Naive thymus-derived CD4-positive, alpha-beta T cell (primary cell): ENCODE measurements at regions of chr2 and their contacts with region 1.

Region 1: DNA sequence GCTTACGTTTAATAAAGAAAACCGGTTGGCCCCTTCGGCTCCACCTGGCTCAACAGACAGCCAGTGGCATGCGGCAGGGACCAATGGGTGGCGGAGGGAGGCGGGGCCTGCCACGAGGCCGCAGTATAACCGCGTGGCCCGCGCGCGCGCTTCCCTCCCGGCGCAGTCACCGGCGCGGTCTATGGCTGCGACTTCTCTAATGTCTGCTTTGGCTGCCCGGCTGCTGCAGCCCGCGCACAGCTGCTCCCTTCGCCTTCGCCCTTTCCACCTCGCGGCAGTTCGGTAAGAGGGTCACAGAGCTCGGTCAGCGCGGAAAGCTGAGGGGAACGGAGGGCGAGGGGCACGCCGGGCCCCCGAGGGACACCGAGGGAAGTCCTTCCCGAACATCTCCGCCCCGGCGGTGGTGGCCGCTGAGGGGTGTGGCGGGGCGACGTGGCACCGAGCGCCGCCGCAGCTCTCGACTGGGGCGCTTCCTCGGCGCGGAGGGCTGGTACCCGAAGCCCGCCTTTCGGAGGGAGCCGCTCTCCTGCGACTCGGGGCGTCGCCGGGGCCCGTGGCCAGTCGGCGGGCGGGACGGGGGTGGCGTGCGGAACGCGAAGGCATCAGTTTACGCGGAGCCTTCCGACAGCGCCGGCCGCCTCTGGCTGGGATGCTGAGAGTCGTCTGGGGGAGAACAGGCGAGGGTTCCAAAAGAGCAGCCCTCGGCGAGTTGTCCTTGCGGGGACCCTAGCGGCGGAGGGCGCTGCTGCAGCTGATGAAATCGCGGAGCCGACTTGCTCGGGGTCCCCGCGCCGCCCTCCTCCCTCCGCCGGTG is at the start of gene MTHFD2:
- DNase-seq: peak; percentile 76 to 93 (median 82)
- ATAC-seq: peak; percentile 94
- H3K4me3 ChIP-seq: peak within 1 kb of the TSS; percentile 65
- H3K4me3 Mint-ChIP-seq: peak within 1 kb of the TSS; percentile 90 to 100 (median 96)
- H3K27ac ChIP-seq: peak within 1 kb of the TSS; percentile 88
- H3K27ac Mint-ChIP-seq: peak within 1 kb of the TSS; percentile 94 to 100 (median 97)
- H3K4me1 ChIP-seq: peaks cover 13 to 16% of the 10 kb centered on the region in 2 donors
- H3K4me1 Mint-ChIP-seq: peaks cover 29 to 50% (median 35%) of the 10 kb centered on the region in 7 donors
- H3K27me3 ChIP-seq: no peaks in the 10 kb centered on the region
- H3K27me3 Mint-ChIP-seq: no peaks in the 10 kb centered on the region
- total RNA-seq, gene MTHFD2: 14.5 to 186 (median 25.1) TPM

Region 2: DNA sequence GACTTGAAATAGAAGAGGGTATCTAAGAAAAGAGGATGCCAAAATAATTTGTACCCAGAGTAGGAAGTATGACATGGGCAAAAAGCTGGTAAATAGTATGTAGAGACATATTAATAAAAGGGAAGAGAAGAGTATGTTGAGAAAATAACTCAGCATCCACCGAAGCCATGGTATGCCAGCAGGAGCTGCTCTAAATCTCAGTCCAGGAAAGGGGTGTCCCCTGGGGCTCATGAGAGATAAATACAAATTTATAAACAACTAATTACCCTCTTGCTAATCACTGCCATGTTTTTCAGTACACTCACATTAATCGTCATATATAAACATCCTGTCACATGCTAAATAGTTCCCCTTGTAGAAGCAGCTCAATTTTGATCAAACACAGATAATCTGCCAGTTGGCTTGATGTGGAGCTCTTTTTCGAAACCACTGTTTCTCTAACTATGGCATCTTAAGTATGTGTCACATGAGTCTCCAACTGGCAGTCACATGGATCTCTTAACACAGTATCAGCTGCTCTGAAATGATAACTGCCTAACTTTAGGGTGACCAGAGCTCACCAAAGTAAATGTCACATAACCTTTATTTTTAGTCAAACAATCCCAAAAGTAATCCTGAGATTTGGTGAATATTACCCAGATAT is 1404.7 kb before region 1 on chr2:
- CTCF ChIA-PET with region 1: no interaction called
- POLR2A ChIA-PET with region 1: no interaction called
- intact Hi-C with region 1: no loop called
- DNase-seq: no peak
- ATAC-seq: no peak
- H3K4me3 ChIP-seq: no peak overlapping the region
- H3K4me3 Mint-ChIP-seq: no peak overlapping the region
- H3K27ac ChIP-seq: no peak overlapping the region
- H3K27ac Mint-ChIP-seq: no peak overlapping the region
- H3K4me1 ChIP-seq: no peaks in the 10 kb centered on the region
- H3K4me1 Mint-ChIP-seq: peaks cover 6 to 23% (median 17%) of the 10 kb centered on the region in 7 donors
- H3K27me3 ChIP-seq: no peaks in the 10 kb centered on the region
- H3K27me3 Mint-ChIP-seq: no peaks in the 10 kb centered on the region

Region 3: DNA sequence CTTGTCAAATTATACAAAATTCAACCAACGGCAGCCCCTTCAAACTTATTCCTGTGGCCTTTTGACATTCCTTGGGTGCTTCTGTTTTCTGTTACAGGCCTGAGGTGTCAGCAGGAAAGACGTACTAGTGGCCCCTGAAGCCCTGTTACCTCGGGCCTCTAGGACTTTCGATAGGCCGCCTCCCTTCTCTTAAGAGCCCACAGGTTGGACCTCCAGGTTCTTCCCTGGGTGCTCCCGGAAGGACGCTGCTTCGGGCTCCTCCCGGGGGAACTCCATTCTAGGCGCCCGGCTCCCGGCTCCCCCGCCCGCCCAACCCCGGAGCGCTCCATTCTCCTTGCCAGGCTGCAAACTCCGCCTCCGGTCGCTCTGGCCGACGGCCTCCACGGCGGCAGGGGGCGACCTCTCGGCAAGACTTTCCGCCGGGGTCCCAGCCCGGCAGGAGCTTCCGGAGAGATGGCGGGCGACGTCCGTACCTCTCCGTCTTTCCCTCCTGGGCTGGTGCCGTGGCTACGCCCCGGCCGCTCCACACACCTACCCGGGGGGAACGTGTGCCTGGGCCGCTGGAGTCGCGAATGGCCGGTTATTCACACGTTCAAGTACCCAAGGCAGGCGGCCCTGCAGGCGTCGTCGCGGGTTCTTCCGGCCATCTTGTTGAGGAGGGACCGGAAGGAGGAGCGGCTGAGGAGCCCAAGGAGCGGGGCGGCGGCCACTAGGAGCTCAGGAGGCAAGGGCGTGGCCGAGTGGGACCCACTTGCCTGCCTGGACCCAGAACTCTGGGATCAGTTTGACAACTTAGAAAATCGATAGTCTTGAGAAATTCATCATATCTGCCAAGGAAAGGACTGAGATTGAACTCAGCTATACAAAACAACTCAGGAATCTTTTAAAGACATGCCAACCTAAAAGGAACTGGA is 78.5 kb before region 1 on chr2:
- CTCF ChIA-PET with region 1: interaction called, 4 read pairs
- POLR2A ChIA-PET with region 1: interaction called, 4 read pairs
- intact Hi-C with region 1: loop called in 1 of 2 experiments (anchors 1 kb)
- DNase-seq: peak; percentile 69 to 91 (median 80)
- ATAC-seq: peak; percentile 98
- H3K4me3 ChIP-seq: peak overlapping the region; percentile 89
- H3K4me3 Mint-ChIP-seq: peak overlapping the region; percentile 82 to 92 (median 88)
- H3K27ac ChIP-seq: peak overlapping the region; percentile 83
- H3K27ac Mint-ChIP-seq: peak overlapping the region; percentile 79 to 96 (median 91)
- H3K4me1 ChIP-seq: no peaks in the 10 kb centered on the region
- H3K4me1 Mint-ChIP-seq: peaks cover 8 to 12% (median 9%) of the 10 kb centered on the region in 7 donors
- H3K27me3 ChIP-seq: no peaks in the 10 kb centered on the region
- H3K27me3 Mint-ChIP-seq: peaks cover 0 to 5% (median 2%) of the 10 kb centered on the region in 5 donors

Region 4: DNA sequence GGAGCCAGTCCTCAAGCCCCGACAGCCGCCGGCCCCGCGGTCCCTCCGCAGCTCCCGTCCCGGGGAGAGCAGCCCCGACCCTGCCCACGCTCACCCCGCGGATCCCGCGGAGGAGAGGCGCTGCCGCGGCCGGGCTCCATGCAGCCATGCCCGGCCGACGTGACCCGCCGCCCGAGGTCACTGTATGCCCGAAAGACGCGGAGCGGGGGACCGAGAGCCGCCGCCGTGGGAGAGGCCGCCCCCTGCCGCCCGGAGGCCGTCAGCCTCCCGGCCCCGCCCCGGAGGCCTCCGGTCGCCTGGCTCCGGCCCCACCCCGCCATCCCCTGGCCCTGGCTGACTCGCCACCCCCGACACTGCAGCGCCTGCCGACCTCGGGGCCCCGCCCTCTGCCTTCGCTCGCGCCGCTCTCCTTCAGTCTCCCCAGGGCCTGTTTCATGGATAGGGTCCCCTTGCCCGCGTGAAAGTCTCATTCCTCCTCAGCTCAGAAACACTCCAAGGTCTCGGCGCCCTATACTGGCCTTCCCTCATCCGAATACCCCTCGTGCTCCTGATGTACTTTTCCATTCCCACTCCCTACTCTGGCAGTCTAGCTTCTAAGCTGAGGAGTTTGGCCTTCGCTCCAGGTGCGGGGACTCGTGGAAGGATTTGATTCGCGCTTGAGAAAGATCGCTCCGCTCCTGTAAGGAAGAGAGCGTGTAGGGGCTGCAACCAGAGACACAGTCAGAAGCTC is 50.8 kb before region 1 on chr2 and contains the start of gene BOLA3:
- CTCF ChIA-PET with region 1: no interaction called
- POLR2A ChIA-PET with region 1: interaction called, 3 read pairs
- intact Hi-C with region 1: loop called (anchors 1 to 2 kb)
- DNase-seq: peak; percentile 55 to 93 (median 70)
- ATAC-seq: peak; percentile 95
- H3K4me3 ChIP-seq: peak within 1 kb of the TSS; percentile 72
- H3K4me3 Mint-ChIP-seq: no peak within 1 kb of the TSS
- H3K27ac ChIP-seq: peak within 1 kb of the TSS; percentile 72
- H3K27ac Mint-ChIP-seq: no peak within 1 kb of the TSS
- H3K4me1 ChIP-seq: peaks cover 14 to 15% of the 10 kb centered on the region in 2 donors
- H3K4me1 Mint-ChIP-seq: peaks cover 0 to 15% (median 0%) of the 10 kb centered on the region in 7 donors
- H3K27me3 ChIP-seq: no peaks in the 10 kb centered on the region
- H3K27me3 Mint-ChIP-seq: no peaks in the 10 kb centered on the region
- total RNA-seq, gene BOLA3: 6.9 to 54.8 (median 13.7) TPM

Region 5: DNA sequence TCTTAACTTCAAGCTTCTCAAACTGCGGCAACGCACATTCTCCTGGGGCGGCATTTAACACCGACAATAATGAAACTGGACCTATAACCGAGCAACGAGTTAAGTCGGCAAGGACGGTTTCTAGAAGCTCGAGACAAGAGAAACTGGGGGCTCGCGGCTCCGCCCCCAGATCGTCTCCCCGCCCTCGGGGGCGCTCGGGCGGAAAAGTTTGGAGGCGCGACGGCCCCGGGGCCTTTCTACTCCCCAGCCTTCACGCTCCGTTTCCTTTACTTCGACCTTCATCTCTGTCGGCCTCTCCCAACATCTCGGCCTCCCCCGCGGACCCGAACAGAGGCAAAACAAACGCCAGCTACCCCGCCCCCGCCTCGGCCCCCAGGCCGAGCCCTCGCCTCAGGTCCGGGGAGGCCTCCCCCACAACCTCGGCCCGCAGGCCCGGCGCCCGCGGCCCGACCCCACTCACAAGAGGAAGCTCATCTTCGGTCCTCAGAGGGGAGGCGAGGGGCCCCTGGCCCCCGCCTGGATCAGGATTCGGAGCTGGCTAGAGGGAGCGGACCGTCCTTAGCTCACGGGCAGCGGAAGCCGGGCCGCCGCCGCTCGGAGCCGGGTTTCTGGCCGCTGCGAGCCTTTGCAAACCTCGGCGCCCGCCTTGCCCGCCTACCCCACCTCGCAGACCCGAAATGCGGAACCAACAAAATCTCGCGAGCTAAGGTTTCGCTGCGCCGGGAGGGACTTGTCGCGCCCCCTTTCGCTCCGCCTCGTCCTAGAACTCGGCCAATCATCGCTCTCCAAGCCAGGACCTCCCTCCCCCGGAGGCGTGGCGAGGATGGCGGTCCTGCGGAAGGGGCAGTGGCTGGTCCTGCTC is 20.2 kb before region 1 on chr2 and contains the start of gene MOB1A:
- CTCF ChIA-PET with region 1: interaction called, 24 read pairs
- POLR2A ChIA-PET with region 1: interaction called, 60 read pairs
- intact Hi-C with region 1: loop called (anchors 1 kb)
- DNase-seq: peak; percentile 94 to 98 (median 97)
- ATAC-seq: peak; percentile 97
- H3K4me3 ChIP-seq: peak within 1 kb of the TSS; percentile 89
- H3K4me3 Mint-ChIP-seq: peak within 1 kb of the TSS; percentile 86 to 95 (median 91)
- H3K27ac ChIP-seq: peak within 1 kb of the TSS; percentile 97
- H3K27ac Mint-ChIP-seq: peak within 1 kb of the TSS; percentile 82 to 95 (median 90)
- H3K4me1 ChIP-seq: peaks cover 25 to 37% of the 10 kb centered on the region in 2 donors
- H3K4me1 Mint-ChIP-seq: peaks cover 32 to 46% (median 35%) of the 10 kb centered on the region in 7 donors
- H3K27me3 ChIP-seq: no peaks in the 10 kb centered on the region
- H3K27me3 Mint-ChIP-seq: no peaks in the 10 kb centered on the region
- total RNA-seq, gene MOB1A: 113 to 185 (median 140) TPM

Region 6: GRCh38 chr2:74186038-74186437 is 12.6 kb before region 1 on chr2:
- CTCF ChIA-PET with region 1: interaction called, 3 read pairs
- POLR2A ChIA-PET with region 1: interaction called, 4 read pairs
- intact Hi-C with region 1: loop called in 1 of 2 experiments (anchors 1 kb)
- DNase-seq: peak in 4 of 9 donors; percentile 24 to 58 (median 41)
- ATAC-seq: peak; percentile 94
- H3K4me3 ChIP-seq: no peak overlapping the region
- H3K4me3 Mint-ChIP-seq: peak overlapping the region in 2 of 10 donors; percentile 21 to 81
- H3K27ac ChIP-seq: no peak overlapping the region
- H3K27ac Mint-ChIP-seq: peak overlapping the region in 2 of 9 donors; percentile 10 to 96
- H3K4me1 ChIP-seq: no peaks in the 10 kb centered on the region
- H3K4me1 Mint-ChIP-seq: peaks cover 0 to 40% (median 3%) of the 10 kb centered on the region in 7 donors
- H3K27me3 ChIP-seq: no peaks in the 10 kb centered on the region
- H3K27me3 Mint-ChIP-seq: no peaks in the 10 kb centered on the region

Region 7: GRCh38 chr2:74226648-74227213 is 28.1 kb after region 1 on chr2:
- CTCF ChIA-PET with region 1: no interaction called
- POLR2A ChIA-PET with region 1: no interaction called
- intact Hi-C with region 1: no loop called
- DNase-seq: no peak
- ATAC-seq: no peak
- H3K4me3 ChIP-seq: no peak overlapping the region
- H3K4me3 Mint-ChIP-seq: no peak overlapping the region
- H3K27ac ChIP-seq: no peak overlapping the region
- H3K27ac Mint-ChIP-seq: no peak overlapping the region
- H3K4me1 ChIP-seq: no peaks in the 10 kb centered on the region
- H3K4me1 Mint-ChIP-seq: peaks cover 0 to 9% (median 0%) of the 10 kb centered on the region in 7 donors
- H3K27me3 ChIP-seq: no peaks in the 10 kb centered on the region
- H3K27me3 Mint-ChIP-seq: no peaks in the 10 kb centered on the region

Region 8: GRCh38 chr2:74391580-74392448 is 193.1 kb after region 1 on chr2:
- CTCF ChIA-PET with region 1: no interaction called
- POLR2A ChIA-PET with region 1: interaction called, 6 read pairs
- intact Hi-C with region 1: loop called (anchors 1 to 2 kb)
- DNase-seq: peak; percentile 89 to 99 (median 93)
- ATAC-seq: peak; percentile 97
- H3K4me3 ChIP-seq: peak overlapping the region; percentile 78
- H3K4me3 Mint-ChIP-seq: peak overlapping the region in 4 of 10 donors; percentile 40 to 100 (median 92)
- H3K27ac ChIP-seq: peak overlapping the region; percentile 91
- H3K27ac Mint-ChIP-seq: peak overlapping the region in 8 of 9 donors; percentile 98 to 100 (median 99)
- H3K4me1 ChIP-seq: peaks cover 8 to 25% of the 10 kb centered on the region in 2 donors
- H3K4me1 Mint-ChIP-seq: peaks cover 0 to 15% (median 5%) of the 10 kb centered on the region in 7 donors
- H3K27me3 ChIP-seq: no peaks in the 10 kb centered on the region
- H3K27me3 Mint-ChIP-seq: peaks cover 0 to 14% (median 5%) of the 10 kb centered on the region in 5 donors